B cell (primary cell): ENCODE measurements at regions of chr17 and their contacts with region 1.

Region 1: DNA sequence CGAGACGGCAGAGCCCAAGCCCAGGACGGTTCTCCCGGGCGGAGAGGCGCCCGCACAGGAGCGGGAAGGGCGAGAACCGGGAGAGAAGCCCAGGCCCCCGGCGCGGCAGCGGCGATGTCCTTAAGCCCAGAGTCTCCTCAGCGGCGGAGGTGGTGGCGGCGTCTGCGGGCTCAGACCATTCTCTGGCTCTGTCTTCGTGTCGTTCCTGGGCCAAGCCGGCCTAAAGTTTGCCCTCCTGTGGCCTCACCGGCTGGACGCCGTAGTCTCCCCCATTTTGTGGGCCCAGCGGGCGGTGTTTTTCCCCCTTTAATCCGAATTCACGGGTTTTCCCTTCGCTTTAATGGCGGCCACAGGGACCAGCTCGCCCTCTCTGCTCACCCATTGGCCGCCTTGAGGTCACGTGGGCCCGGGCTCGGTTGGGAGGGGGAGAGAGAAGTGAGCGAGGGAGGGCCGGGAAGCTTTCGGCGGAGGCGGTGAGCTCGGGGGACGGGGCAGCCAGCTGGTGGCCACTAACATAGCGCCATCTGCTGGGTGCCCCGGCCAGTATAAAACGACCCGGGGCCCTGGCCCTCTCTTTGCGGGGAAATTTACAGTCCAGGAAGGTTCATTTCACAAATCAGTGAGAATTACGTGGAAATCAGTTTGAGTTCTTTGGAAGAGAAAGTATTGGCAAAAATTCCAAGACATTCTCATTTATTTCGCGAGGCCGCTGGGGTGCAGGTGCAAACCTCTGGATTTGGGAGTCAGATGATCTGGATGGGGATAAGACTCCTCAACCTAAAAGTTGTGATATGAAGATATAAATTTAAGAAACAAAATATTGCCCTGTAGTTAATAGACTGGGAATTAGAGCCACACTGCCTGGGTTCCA is 755 bp upstream of the MED13 start:
- DNase-seq: peak; percentile 98
- ATAC-seq: peak; percentile 95
- H3K4me3 ChIP-seq: peak overlapping the region; percentile 82 to 100 (median 95)
- H3K4me3 Mint-ChIP-seq: peak overlapping the region; percentile 93
- H3K27ac ChIP-seq: peak overlapping the region; percentile 97 to 99
- H3K27ac Mint-ChIP-seq: peak overlapping the region; percentile 97
- H3K4me1 ChIP-seq: peaks cover 20 to 32% of the 10 kb centered on the region in 2 donors
- H3K4me1 Mint-ChIP-seq: peaks cover 42% of the 10 kb centered on the region
- H3K27me3 ChIP-seq: no peaks in the 10 kb centered on the region
- H3K27me3 Mint-ChIP-seq: no peaks in the 10 kb centered on the region
- CTCF ChIP-seq: peak; percentile 85

Region 2: GRCh38 chr17:61511480-61512182 is 554.2 kb before region 1 on chr17:
- CTCF ChIA-PET with region 1: no interaction called
- POLR2A ChIA-PET with region 1: no interaction called
- intact Hi-C with region 1: no loop called
- DNase-seq: no peak
- ATAC-seq: no peak
- H3K4me3 ChIP-seq: no peak overlapping the region
- H3K4me3 Mint-ChIP-seq: no peak overlapping the region
- H3K27ac ChIP-seq: no peak overlapping the region
- H3K27ac Mint-ChIP-seq: no peak overlapping the region
- H3K4me1 ChIP-seq: no peaks in the 10 kb centered on the region
- H3K4me1 Mint-ChIP-seq: no peaks in the 10 kb centered on the region
- H3K27me3 ChIP-seq: peaks cover 0 to 2% (median 0%) of the 10 kb centered on the region in 4 experiments
- H3K27me3 Mint-ChIP-seq: peaks cover 31% of the 10 kb centered on the region
- CTCF ChIP-seq: no peak

Region 3: DNA sequence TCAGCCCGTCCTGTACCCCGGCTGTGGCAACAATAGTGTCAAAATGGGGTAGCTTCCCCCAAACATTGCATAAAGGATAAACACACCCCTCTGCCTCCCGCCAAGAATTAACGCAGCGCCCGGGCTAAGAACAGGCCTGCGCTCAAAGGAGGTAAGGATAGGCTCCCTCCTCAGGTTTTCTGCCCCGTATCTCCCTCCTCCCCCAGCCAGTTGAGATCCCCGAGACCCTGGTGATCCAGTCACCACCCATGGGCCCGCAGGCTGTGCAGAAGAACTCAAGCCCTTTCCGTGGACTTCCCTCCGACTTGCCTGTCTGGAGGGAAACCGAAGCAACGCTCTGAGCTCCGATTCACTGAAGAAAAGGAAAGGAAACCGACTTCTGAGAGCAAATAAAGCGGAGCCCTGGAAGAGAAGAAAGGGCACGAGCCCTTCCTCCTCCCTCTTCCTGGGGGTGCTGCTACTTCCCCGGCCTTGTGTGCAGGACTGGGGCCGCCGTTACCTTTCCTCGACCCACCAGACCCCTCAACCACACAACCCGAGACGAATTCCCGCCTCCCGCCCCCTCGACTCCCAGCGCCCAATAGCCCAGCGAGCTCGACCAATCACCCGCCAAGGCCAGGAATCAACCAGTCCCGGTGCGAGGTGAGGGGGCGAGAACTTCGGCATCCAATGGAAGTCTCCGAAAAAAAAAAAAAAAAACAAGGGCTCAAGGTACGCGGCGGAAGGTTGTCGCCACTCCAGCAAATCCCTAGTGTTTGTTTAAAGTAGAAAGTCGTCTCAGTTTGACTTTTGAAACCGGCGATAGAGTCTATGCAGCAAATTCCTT is 202.6 kb before region 1 on chr17 and contains the start of gene BRIP1:
- CTCF ChIA-PET with region 1: interaction called, 5 read pairs
- POLR2A ChIA-PET with region 1: interaction called, 3 read pairs
- intact Hi-C with region 1: loop called (anchors 1 kb)
- DNase-seq: peak; percentile 90
- ATAC-seq: peak; percentile 100
- H3K4me3 ChIP-seq: peak within 1 kb of the TSS; percentile 71 to 96 (median 84)
- H3K4me3 Mint-ChIP-seq: peak within 1 kb of the TSS; percentile 92
- H3K27ac ChIP-seq: peak within 1 kb of the TSS; percentile 37 to 67
- H3K27ac Mint-ChIP-seq: peak within 1 kb of the TSS; percentile 89
- H3K4me1 ChIP-seq: peaks cover 3 to 10% of the 10 kb centered on the region in 2 donors
- H3K4me1 Mint-ChIP-seq: peaks cover 18% of the 10 kb centered on the region
- H3K27me3 ChIP-seq: no peaks in the 10 kb centered on the region
- H3K27me3 Mint-ChIP-seq: no peaks in the 10 kb centered on the region
- CTCF ChIP-seq: no peak
- total RNA-seq, gene BRIP1: 2.4 and 4.2 TPM in 2 replicates

Region 4: DNA sequence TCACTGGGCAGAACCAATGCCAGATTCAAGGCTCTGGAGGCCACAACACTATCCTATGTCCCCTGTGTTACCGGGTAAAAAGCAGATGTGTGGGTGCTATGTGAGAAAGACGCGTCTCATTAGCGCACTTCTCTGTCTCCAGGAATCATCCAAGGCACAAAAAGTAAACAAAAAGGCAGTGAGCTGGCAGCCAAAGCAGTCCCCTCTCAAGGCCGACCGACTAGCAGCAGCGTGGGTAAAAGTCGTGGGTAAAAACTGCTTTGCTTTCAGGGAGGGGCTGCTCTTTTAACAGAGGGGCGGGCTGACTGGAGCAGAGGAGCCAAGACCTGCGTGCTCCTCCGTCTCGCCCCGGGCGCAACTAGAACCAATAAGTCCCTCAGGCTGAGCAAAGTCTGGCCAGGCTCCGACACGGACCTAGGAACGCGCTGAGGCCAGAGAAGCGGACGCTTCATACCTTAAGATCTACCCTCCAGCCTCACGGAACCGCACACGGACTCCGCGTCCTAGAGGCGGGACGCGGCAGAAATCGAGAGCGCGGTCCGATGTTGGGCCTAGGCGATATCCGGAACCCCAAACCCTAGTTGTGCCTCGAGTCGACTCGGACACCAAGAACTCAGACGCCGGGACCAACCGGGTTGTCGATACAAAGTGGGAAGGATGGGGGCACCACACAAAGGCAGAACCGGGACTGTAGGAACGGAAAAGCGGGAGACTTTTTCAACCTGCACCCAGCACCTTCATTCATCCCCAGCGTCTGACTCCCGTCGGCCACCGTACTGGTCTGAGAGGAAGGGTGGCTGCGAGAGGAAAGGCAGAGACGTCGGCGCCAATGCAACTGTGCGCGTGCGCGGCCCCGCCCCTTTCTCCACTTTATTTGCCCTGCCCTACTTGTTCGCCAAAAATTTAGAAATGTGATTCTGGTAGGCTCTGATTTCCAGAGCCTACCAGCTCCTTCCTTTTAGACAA is 138.3 kb before region 1 on chr17 and contains the start of gene INTS2:
- CTCF ChIA-PET with region 1: no interaction called
- POLR2A ChIA-PET with region 1: no interaction called
- intact Hi-C with region 1: loop called (anchors 1 kb)
- DNase-seq: peak; percentile 96
- ATAC-seq: peak; percentile 91
- H3K4me3 ChIP-seq: peak within 1 kb of the TSS; percentile 78 to 94 (median 87)
- H3K4me3 Mint-ChIP-seq: peak within 1 kb of the TSS; percentile 97
- H3K27ac ChIP-seq: peak within 1 kb of the TSS; percentile 72 to 77
- H3K27ac Mint-ChIP-seq: peak within 1 kb of the TSS; percentile 96
- H3K4me1 ChIP-seq: peaks cover 15 to 18% of the 10 kb centered on the region in 2 donors
- H3K4me1 Mint-ChIP-seq: peaks cover 24% of the 10 kb centered on the region
- H3K27me3 ChIP-seq: no peaks in the 10 kb centered on the region
- H3K27me3 Mint-ChIP-seq: peaks cover 6% of the 10 kb centered on the region
- CTCF ChIP-seq: no peak
- total RNA-seq, gene INTS2: 19.5 and 22.3 TPM in 2 replicates

Region 5: GRCh38 chr17:62098623-62099231 is 32.9 kb after region 1 on chr17:
- CTCF ChIA-PET with region 1: interaction called, 4 read pairs
- POLR2A ChIA-PET with region 1: interaction called, 5 read pairs
- intact Hi-C with region 1: loop called (anchors 2 kb)
- DNase-seq: peak; percentile 69
- ATAC-seq: peak; percentile 82
- H3K4me3 ChIP-seq: peak overlapping the region in 2 of 5 experiments; percentile 22 to 44
- H3K4me3 Mint-ChIP-seq: peak overlapping the region; percentile 55
- H3K27ac ChIP-seq: peak overlapping the region; percentile 59 to 76
- H3K27ac Mint-ChIP-seq: peak overlapping the region; percentile 69
- H3K4me1 ChIP-seq: peaks cover 23 to 26% of the 10 kb centered on the region in 2 donors
- H3K4me1 Mint-ChIP-seq: peaks cover 32% of the 10 kb centered on the region
- H3K27me3 ChIP-seq: no peaks in the 10 kb centered on the region
- H3K27me3 Mint-ChIP-seq: no peaks in the 10 kb centered on the region
- CTCF ChIP-seq: no peak